Prostate gland (tissue), 2 donors: ENCODE measurements at regions of chr16 and their contacts with region 1.

Region 1: DNA sequence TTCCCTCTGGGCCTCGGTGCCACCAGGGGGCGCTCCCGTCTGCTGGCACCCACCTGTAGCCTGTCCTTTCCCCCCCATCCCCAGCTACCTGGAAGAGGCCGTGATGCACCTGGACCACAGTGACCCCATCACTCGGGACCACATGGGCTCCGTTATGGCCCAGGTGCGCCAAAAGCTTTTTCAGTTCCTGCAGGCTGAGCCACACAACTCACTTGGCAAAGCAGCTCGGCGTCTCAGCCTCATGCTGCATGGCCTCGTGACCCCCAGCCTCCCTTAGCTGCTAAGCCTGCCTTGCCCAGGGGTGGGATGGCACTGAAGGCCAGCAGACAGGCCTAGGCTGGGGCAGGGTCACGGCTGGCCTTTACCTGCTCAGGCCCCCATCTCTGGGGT is 818 bp upstream of the NRN1L start:
- DNase-seq: peak; percentile 62
- H3K4me3 ChIP-seq: no peak overlapping the region
- H3K27ac ChIP-seq: peak overlapping the region; percentile 56 to 59
- H3K4me1 ChIP-seq: peaks cover 7% of the 10 kb centered on the region
- H3K27me3 ChIP-seq: no peaks in the 10 kb centered on the region
- CTCF ChIP-seq: peak; percentile 72 to 89 (median 84)
- POLR2A ChIP-seq: no peak

Region 2: DNA sequence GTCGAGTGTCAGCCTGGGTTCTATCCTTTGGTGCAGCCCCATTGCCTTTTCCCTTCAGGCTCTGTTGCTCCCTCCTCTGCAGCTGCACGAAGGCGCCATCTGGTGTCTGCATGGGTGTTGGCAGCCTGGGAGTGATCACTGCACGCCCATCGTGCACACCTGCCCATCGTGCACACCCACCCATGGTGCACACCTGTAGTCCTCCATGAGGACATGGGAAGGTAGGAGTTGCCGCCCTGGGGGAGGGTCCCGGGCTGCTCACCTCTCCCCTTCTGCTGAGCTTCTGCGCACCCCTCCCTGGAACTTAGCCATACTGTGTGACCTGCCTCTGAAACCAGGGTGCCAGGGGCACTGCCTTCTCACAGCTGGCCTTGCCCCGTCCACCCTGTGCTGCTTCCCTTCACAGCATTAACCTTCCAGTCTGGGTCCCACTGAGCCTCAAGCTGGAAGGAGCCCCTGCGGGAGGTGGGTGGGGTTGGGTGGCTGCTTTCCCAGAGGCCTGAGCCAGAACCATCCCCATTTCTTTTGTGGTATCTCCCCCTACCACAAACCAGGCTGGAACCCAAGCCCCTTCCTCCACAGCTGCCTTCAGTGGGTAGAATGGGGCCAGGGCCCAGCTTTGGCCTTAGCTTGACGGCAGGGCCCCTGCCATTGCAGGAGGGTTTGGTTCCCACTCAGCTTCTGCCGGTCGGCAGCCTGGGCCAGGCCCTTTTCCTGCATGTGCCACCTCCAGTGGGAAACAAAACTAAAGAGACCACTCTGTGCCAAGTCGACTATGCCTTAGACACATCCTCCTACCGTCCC is 44.9 kb after region 1 on chr16:
- intact Hi-C with region 1: loop called (anchors 1 kb)
- DNase-seq: peak; percentile 62
- H3K4me3 ChIP-seq: no peak overlapping the region
- H3K27ac ChIP-seq: no peak overlapping the region
- H3K4me1 ChIP-seq: peaks cover 12% of the 10 kb centered on the region
- H3K27me3 ChIP-seq: no peaks in the 10 kb centered on the region
- CTCF ChIP-seq: peak; percentile 60 to 94 (median 83)
- POLR2A ChIP-seq: no peak

Region 3: GRCh38 chr16:68040507-68041288 is 156.8 kb after region 1 on chr16:
- intact Hi-C with region 1: loop called (anchors 5 kb)
- DNase-seq: peak; percentile 74
- H3K4me3 ChIP-seq: no peak overlapping the region
- H3K27ac ChIP-seq: no peak overlapping the region
- H3K4me1 ChIP-seq: no peaks in the 10 kb centered on the region
- H3K27me3 ChIP-seq: no peaks in the 10 kb centered on the region
- CTCF ChIP-seq: peak; percentile 77 to 90 (median 83)
- POLR2A ChIP-seq: no peak